Motor neuron (in vitro differentiated cells): ENCODE measurements at regions of chr1 and their contacts with region 1.

Region 1: DNA sequence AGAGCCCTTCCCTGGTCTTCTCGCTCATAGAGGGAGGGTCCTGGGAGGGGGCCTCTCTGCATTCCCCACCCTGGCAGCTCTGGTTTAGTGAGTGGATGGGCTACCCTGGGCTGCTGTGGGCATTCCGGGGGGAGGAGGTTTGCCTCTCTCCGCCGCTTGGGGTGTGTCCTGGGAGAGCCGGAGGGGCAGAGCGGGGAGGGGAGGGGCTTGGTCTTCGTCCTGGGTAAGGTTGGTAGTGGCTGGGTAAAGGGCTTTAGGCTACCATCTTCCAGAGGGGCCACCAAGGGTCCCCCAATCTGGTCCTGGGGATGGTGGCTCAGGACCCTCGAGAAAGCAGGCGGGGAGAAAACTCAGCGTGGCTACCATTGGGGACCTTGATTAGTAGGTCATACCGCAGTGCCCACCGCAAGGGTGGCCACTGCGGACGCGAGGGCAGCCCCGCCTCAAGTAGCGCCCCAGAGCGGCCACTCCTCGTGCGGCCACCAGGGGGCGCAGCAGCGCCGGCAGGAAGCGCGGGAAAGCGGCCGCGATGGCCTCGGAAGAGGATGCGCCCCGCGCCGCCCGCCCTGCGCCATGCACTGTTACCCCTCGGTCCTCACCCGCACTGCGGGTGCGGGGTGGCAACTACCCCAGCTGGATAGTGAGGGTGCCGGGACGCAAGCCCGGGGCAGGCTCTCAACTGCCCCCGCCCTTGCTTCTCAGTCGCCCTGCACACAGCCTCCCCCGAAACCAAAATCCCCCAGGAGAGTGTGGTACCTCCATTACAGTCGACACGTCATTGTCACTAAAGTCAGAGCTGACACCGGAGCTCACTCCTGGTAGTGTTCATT is 44.1 kb upstream of the SLC25A33 start:
- ATAC-seq: peak; percentile 56 to 90 (median 66)
- H3K4me3 ChIP-seq: peak overlapping the region; percentile 7 to 24 (median 20)
- H3K27ac ChIP-seq: no peak overlapping the region
- H3K4me1 ChIP-seq: no peaks in the 10 kb centered on the region

Region 2: DNA sequence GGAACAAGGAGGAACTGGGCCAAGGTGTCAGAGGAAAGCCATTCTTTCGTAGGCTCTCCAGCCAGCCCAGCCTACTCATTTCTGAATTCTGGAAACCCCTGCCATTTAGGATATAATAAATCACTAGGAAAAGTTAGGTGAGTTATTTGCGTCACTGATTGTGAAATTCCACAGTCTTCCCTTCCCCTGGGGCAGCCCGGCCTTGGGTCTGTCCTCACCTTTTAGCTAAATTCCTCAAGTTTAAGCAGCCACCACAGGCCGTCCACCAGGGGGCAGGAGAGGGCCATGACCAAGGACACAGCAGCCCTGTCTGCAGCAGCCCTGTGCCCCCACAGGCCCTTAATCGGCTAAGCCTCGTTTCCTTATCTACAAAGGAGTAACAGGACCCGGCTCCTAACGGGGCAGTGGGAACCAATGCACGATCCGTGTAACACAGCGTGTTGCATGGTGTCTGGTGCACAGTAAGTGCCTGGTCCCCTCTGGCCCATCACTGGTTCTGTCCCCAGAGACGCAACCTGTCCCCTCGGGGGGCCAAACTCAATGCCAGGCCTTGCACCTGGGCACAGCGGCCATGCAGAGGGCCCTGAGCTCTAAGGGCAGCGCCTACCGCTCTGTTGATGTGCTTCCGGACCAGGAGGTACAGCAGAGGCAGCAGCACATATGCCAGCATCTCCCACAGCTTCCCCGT is 384.3 kb before region 1 on chr1:
- in situ Hi-C with region 1: loop called in 3 of 9 experiments (anchors 25 kb)
- ATAC-seq: peak; percentile 88 to 98 (median 92)
- H3K4me3 ChIP-seq: no peak overlapping the region
- H3K27ac ChIP-seq: no peak overlapping the region
- H3K4me1 ChIP-seq: peaks cover 0 to 2% of the 10 kb centered on the region in 2 donors

Region 3: DNA sequence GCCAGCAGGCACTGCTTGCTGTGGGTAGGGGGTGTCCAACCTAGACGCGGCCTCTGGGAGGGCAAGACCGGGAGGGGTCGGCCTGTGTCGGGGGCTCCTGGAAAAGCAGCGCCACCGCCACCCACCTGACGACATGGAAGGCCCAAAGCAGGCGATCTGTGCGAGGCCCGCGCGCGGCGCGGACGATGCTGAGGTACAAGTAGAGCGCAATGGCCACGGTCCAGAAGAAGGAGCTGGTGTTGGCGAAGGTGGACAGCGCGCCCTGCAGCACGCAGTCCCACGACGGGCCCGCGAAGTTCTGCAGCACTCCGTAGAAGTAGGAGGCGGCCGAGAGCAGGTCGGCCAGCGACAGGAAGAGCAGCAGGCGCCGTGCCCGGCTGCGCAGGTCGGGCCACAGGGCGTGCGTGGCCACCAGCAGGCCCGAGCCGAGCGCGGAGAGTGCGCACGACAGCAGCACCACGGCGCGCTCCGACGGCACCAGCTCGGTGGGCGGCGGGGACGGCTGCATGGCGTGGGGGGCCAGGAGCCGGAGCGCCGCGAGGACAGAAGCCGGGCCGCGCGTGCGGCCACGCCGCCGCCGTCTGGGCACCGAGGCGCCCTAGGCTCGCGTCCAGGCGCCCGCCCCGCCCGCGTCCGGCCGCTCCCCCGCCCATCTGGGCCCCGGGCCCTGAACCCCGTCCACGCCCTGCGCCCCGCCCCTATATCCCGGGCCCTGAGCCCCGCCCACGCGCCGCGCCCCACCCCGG is 366.5 kb before region 1 on chr1 and contains the start of gene GPR157:
- in situ Hi-C with region 1: loop called in 4 of 9 experiments (anchors 25 kb)
- ATAC-seq: peak; percentile 65 to 83 (median 79)
- H3K4me3 ChIP-seq: peak within 1 kb of the TSS; percentile 44 to 68 (median 53)
- H3K27ac ChIP-seq: peak within 1 kb of the TSS in 1 of 2 donors; percentile 0
- H3K4me1 ChIP-seq: peaks cover 8 to 15% of the 10 kb centered on the region in 2 donors
- total RNA-seq, gene GPR157: 1.6 to 5.7 (median 2.4) TPM

Region 4: GRCh38 chr1:9249534-9250410 is 245.4 kb before region 1 on chr1:
- in situ Hi-C with region 1: loop called in 5 of 9 experiments (anchors 25 kb)
- ATAC-seq: peak; percentile 19 to 91 (median 37)
- H3K4me3 ChIP-seq: no peak overlapping the region
- H3K27ac ChIP-seq: peak overlapping the region in 1 of 2 donors; percentile 41
- H3K4me1 ChIP-seq: peaks cover 51 to 58% of the 10 kb centered on the region in 2 donors

Region 5: GRCh38 chr1:9269078-9269501 is 226.1 kb before region 1 on chr1:
- in situ Hi-C with region 1: loop called in 7 of 9 experiments (anchors 10 to 25 kb)
- ATAC-seq: peak in 5 of 8 experiments; percentile 11 to 34 (median 30)
- H3K4me3 ChIP-seq: no peak overlapping the region
- H3K27ac ChIP-seq: no peak overlapping the region
- H3K4me1 ChIP-seq: peaks cover 36 to 45% of the 10 kb centered on the region in 2 donors

Region 6: DNA sequence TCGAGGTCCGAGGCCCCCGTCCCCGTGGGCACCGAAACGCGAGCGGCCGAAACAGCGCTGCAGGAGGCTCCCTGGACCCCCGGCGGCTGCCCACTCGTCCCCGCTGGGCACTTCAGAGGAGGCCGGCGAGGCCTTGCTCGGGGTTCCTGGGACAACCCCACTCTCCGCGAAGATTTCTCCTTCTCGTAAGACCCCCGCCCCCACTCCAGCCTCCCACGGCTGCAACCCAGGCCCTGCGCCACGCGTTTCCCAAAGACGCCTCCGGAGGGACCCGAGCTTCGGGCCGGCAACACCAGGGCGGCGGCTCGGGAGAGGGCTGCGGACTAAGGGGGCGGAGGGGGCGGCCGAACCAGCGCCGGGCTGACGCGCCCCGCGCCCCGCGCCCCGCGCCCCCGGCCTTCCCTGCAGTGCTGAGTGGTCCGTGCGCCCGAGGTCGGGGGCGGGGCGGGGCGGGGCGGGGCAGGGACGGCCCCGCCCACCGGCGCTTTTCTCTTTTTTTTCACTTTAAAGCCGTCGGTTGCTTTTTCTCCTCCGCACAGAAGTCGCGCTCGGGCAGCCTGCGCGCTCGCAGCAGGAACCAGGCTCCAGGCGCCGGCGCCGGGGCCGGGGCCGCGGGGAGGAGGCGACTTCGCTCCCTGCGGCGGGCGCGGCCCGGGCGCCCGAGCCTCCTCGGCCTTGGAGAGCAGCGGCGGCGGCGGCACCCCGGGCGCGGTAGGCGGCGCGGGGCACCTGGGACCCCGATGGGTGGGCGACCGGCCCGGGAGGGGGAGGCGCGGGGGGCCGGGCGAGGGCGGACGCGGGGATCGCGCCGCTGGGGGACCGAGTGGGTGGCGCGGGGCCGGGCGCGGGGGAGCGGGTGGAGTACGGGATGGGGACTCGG is 202.5 kb before region 1 on chr1 and contains the start of gene SPSB1:
- in situ Hi-C with region 1: loop called in 2 of 9 experiments (anchors 10 to 25 kb)
- ATAC-seq: peak; percentile 27 to 83 (median 67)
- H3K4me3 ChIP-seq: peak within 1 kb of the TSS; percentile 53 to 78 (median 64)
- H3K27ac ChIP-seq: peak within 1 kb of the TSS; percentile 24 to 38
- H3K4me1 ChIP-seq: peaks cover 22 to 24% of the 10 kb centered on the region in 2 donors
- total RNA-seq, gene SPSB1: 1.3 to 30.4 (median 3.9) TPM

Region 7: GRCh38 chr1:9573723-9574122 is 78.6 kb after region 1 on chr1:
- in situ Hi-C with region 1: loop called in 1 of 9 experiments (anchors 10 kb)
- ATAC-seq: no peak
- H3K4me3 ChIP-seq: no peak overlapping the region
- H3K27ac ChIP-seq: no peak overlapping the region
- H3K4me1 ChIP-seq: no peaks in the 10 kb centered on the region